Endothelial cell of umbilical vein (primary cell): ENCODE measurements at regions of chr11 and their contacts with region 1.

Region 1: GRCh38 chr11:3849297-3849874 is 6.1 kb upstream of the STIM1 start:
- DNase-seq: peak; percentile 51
- H3K4me3 ChIP-seq: no peak overlapping the region
- H3K27ac ChIP-seq: no peak overlapping the region
- H3K4me1 ChIP-seq: no peaks in the 10 kb centered on the region
- H3K27me3 ChIP-seq: peaks cover 0 to 3% of the 10 kb centered on the region in 2 experiments
- CTCF ChIP-seq: peak; percentile 51 to 59
- POLR2A ChIP-seq: no peak

Region 2: DNA sequence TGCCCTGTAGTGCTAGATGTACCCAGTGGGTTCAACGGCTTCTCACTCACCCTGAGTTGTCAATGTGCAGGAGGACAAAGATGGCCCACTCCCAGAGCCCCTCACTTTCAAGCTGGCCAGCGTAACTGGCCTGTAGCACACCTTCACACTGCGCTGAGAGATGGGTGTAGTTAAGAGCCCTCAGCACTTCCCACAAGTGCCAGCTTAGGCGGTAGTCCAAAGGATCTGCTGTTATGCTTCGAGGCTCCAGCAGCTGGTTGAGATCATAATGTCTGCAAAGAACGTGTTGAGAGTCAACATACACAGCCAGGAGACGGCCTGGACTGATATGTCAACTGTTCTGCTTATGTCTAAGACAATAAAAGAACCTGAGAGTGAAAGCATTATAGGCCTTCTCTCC is 163.5 kb before region 1 on chr11:
- CTCF ChIA-PET with region 1: no interaction called
- POLR2A ChIA-PET with region 1: no interaction called
- dilution Hi-C with region 1: no loop called
- intact Hi-C with region 1: no loop called
- DNase-seq: no peak
- H3K4me3 ChIP-seq: no peak overlapping the region
- H3K27ac ChIP-seq: no peak overlapping the region
- H3K4me1 ChIP-seq: no peaks in the 10 kb centered on the region
- H3K27me3 ChIP-seq: no peaks in the 10 kb centered on the region
- CTCF ChIP-seq: no peak
- POLR2A ChIP-seq: no peak

Region 3: DNA sequence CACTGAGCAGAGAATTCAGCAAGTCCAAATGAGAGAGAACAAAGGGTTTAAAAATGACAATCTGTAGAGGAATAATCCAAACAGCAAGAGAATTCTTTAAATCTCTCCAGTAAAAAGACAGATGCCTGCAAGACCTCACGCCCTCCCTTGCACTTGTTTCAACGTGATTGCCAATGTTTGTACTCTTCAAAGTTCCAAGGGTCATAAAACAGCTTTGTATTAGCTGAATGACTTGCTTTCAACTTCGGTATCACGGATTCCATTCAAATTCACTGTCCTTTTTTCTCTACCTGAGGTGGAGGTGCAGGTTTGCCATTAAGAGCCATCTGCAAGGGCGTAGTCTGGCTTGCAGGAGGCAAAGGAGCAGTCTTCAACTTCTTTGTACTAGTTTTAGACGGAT is 137.1 kb before region 1 on chr11:
- CTCF ChIA-PET with region 1: no interaction called
- POLR2A ChIA-PET with region 1: no interaction called
- dilution Hi-C with region 1: no loop called
- intact Hi-C with region 1: no loop called
- DNase-seq: no peak
- H3K4me3 ChIP-seq: no peak overlapping the region
- H3K27ac ChIP-seq: no peak overlapping the region
- H3K4me1 ChIP-seq: no peaks in the 10 kb centered on the region
- H3K27me3 ChIP-seq: no peaks in the 10 kb centered on the region
- CTCF ChIP-seq: no peak
- POLR2A ChIP-seq: no peak

Region 4: GRCh38 chr11:3834664-3835461 is 14.5 kb before region 1 on chr11:
- CTCF ChIA-PET with region 1: interaction called, 88 read pairs
- POLR2A ChIA-PET with region 1: no interaction called
- dilution Hi-C with region 1: no loop called
- intact Hi-C with region 1: no loop called
- DNase-seq: peak; percentile 15
- H3K4me3 ChIP-seq: no peak overlapping the region
- H3K27ac ChIP-seq: no peak overlapping the region
- H3K4me1 ChIP-seq: peaks cover 33% of the 10 kb centered on the region
- H3K27me3 ChIP-seq: no peaks in the 10 kb centered on the region
- CTCF ChIP-seq: no peak
- POLR2A ChIP-seq: no peak

Region 5: DNA sequence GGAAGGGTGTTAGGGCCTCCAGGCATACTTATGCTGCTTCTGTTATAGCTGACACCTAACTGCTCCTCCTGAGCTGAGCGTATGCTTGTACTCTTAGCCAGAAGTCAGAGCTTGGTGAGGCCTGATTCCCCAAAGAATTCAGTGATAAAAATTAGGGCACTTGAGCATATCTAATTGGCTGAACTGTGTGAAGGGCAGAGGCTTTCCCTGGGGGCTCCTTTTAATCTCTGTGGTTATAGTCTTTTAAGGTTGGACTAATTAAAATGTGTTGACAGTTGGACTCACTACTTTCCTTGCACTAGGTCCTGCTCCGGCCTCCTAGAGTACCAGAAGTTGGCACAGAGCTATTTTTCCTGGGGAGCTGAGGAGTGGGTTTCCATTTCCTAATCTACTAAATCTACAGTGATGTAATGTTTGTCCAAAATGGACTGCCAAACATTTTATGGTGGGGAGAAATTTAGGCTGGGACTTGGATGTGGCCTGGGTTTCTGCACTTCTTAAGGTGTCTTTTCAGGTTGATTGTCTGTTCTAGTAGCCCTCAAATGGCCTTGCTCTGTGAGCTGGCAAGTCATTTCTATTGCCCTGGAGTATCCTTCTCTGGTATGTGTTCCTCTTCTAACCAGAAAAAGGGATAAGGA is 24.4 kb after region 1 on chr11:
- CTCF ChIA-PET with region 1: interaction called, 34 read pairs
- POLR2A ChIA-PET with region 1: interaction called, 4 read pairs
- dilution Hi-C with region 1: no loop called
- intact Hi-C with region 1: no loop called
- DNase-seq: no peak
- H3K4me3 ChIP-seq: no peak overlapping the region
- H3K27ac ChIP-seq: no peak overlapping the region
- H3K4me1 ChIP-seq: peaks cover 4% of the 10 kb centered on the region
- H3K27me3 ChIP-seq: no peaks in the 10 kb centered on the region
- CTCF ChIP-seq: no peak
- POLR2A ChIP-seq: no peak

Region 6: DNA sequence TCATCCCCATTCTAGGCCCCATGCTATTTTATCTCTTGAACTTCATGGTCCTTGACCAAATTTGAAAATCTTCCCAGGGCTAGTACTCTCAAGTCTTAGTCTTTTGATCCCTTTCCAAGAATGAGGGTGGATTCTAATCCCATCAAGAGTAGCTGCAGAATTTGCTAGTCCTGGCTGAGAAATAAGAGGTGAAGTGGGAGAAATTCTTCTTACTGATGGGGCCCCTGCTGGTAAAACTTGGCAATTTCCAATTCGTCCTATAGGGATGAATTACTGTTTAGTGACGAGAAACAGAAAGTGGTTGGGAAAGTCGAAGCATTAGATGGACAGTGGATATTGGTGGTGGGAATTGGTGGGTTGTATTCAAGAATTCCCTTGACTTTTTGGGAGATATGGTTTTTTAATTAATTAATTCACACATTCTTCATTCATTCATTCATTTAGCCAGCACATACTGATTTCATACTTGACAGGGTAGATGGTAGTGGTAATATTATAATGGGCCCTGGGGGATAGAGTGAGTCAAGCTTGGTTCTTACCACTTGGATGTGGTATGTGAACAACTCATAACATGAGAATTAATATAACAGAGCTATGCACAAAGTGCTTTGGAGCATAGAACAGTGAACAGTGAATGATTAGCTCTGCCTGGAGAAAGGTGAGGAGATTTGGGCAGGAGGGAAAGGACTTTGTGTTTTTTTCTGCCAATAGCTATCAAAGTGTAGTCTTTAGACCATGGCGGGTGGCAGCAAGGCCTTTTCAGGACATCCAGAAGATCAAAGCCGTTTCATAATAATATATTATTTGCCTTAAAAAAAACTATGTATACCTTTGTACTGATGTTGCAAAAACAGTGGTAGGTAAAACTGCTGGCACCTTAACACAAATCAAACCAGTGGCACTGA is 109.9 kb after region 1 on chr11:
- CTCF ChIA-PET with region 1: interaction called, 40 read pairs
- POLR2A ChIA-PET with region 1: no interaction called
- dilution Hi-C with region 1: no loop called
- intact Hi-C with region 1: loop called (anchors 1 kb)
- DNase-seq: no peak
- H3K4me3 ChIP-seq: no peak overlapping the region
- H3K27ac ChIP-seq: no peak overlapping the region
- H3K4me1 ChIP-seq: no peaks in the 10 kb centered on the region
- H3K27me3 ChIP-seq: no peaks in the 10 kb centered on the region
- CTCF ChIP-seq: no peak
- POLR2A ChIP-seq: no peak

Region 7: DNA sequence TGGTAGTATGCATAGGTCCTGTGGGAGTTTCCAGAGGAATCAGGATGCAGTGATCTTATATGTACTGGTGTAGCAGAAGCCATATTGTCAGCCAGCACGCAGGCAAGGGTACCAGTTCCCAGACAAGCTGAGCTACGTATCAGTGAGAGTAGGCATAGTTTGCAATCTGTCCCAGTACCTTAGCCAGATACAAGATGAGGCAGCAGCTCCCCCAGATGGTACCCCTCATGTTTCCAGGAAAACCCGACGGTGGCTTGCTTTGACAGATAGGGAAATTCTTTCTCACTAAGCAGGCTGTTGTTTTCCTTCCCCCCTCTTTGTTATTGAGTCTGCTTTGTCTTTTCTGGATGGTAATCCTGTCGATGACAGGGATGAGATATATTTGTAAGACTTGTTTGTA is 135.5 kb after region 1 on chr11:
- CTCF ChIA-PET with region 1: interaction called, 29 read pairs
- POLR2A ChIA-PET with region 1: no interaction called
- dilution Hi-C with region 1: no loop called
- intact Hi-C with region 1: no loop called
- DNase-seq: peak; percentile 55
- H3K4me3 ChIP-seq: no peak overlapping the region
- H3K27ac ChIP-seq: no peak overlapping the region
- H3K4me1 ChIP-seq: no peaks in the 10 kb centered on the region
- H3K27me3 ChIP-seq: no peaks in the 10 kb centered on the region
- CTCF ChIP-seq: peak in 1 of 2 donors; percentile 5
- POLR2A ChIP-seq: no peak

Region 8: GRCh38 chr11:4044976-4045646 is 195.7 kb after region 1 on chr11:
- CTCF ChIA-PET with region 1: interaction called, 38 read pairs
- POLR2A ChIA-PET with region 1: no interaction called
- dilution Hi-C with region 1: loop called (anchors 25 kb)
- intact Hi-C with region 1: no loop called
- DNase-seq: peak; percentile 27
- H3K4me3 ChIP-seq: no peak overlapping the region
- H3K27ac ChIP-seq: no peak overlapping the region
- H3K4me1 ChIP-seq: peaks cover 3% of the 10 kb centered on the region
- H3K27me3 ChIP-seq: no peaks in the 10 kb centered on the region
- CTCF ChIP-seq: no peak
- POLR2A ChIP-seq: no peak

Region 9: GRCh38 chr11:4087551-4087950 is 238.2 kb after region 1 on chr11:
- CTCF ChIA-PET with region 1: interaction called, 45 read pairs
- POLR2A ChIA-PET with region 1: no interaction called
- dilution Hi-C with region 1: no loop called
- intact Hi-C with region 1: no loop called
- DNase-seq: no peak
- H3K4me3 ChIP-seq: no peak overlapping the region
- H3K27ac ChIP-seq: no peak overlapping the region
- H3K4me1 ChIP-seq: no peaks in the 10 kb centered on the region
- H3K27me3 ChIP-seq: no peaks in the 10 kb centered on the region
- CTCF ChIP-seq: peak in 1 of 2 donors; percentile 6
- POLR2A ChIP-seq: no peak